ENCODE measurements at regions of chr16 and their contacts with region 1.

Region 1: DNA sequence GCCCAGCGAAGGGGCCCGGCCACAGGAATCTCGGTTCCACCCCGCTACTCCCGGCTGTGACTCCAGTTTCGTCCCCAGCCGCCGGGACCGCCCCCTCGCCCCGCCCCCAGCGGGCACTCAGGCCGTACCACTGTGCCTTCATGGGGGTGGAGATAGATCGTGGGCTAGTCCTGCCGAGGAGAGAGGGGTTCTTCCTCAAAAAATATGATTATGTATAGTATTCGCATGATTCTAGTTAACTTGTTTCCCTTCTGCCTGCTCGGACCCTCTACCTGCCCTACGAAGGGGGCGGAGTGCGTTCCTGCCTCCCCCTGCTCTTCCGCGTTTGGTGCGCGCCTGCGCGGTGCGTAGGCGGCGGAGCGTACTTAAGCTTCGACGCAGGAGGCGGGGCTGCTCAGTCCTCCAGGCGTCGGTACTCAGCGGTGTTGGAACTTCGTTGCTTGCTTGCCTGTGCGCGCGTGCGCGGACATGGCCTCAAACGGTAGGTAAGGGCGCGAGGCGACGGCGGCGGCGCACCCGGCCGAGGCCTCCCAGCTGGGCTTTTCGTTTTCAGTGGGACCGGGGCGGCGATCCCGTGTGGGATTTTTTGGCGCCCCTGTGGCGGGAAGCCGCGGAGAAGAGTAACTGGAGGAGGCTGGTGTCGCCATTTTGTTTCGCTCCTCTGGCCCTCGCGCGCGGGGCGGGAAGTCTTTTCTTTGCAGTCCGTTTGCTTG is at the start of gene FUS:
- DNase-seq: peak; percentile 95
- H3K4me3 ChIP-seq: peak within 1 kb of the TSS; percentile 78 to 94
- H3K27ac ChIP-seq: peak within 1 kb of the TSS; percentile 96 to 97
- H3K4me1 ChIP-seq: peaks cover 29% of the 10 kb centered on the region
- H3K27me3 ChIP-seq: no peaks in the 10 kb centered on the region
- CTCF ChIP-seq: peak in 2 of 3 experiments; percentile 18 to 20
- POLR2A ChIP-seq: peak; percentile 85
- total RNA-seq, gene FUS: 205 to 217 TPM

Region 2: GRCh38 chr16:31052124-31052523 is 127.8 kb before region 1 on chr16:
- intact Hi-C with region 1: no loop called
- DNase-seq: no peak
- H3K4me3 ChIP-seq: no peak overlapping the region
- H3K27ac ChIP-seq: no peak overlapping the region
- H3K4me1 ChIP-seq: no peaks in the 10 kb centered on the region
- H3K27me3 ChIP-seq: no peaks in the 10 kb centered on the region
- CTCF ChIP-seq: no peak
- POLR2A ChIP-seq: no peak

Region 3: DNA sequence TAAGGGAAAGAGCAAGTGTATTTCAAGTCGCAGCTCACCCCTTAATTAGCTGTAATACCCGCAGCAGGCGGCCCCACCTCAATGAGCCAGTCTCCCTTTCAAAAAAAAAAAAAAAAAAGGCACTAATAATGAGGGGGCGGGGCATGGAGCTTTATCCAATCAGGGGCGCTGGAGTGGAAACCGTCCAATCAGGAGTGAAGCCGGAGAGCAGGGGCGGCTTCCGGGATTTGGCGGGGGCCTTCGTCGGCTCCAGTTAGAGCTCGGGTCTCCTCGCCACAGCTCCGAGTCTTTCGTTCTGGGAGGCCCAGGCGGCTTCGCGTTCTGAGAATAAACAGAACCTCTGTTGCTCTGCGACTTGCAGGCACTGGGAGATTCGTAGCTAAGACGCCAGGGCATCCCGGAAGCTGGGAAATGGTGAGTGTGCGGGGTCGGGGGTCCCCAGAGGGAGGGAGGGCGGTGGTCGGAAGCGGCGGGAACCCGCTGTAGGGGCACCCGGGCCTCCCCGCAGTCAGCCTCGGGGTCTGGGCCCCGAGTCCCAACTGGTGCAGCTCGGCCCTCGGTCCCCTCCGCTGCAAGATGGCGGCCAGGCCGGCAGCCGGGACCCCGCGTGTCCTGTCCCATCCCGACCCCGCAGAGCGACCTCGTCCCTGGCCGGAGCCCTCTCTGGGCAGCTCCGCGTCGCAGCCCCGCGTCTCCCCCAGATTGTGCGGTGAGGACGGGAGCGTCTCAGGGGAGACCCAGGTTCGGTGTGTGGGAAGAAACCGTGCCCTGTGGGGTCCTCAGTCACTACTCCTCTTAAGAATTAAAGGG is 693.9 kb after region 1 on chr16 and contains the start of gene ZNF267:
- intact Hi-C with region 1: loop called (anchors 10 kb)
- DNase-seq: peak; percentile 98
- H3K4me3 ChIP-seq: peak within 1 kb of the TSS; percentile 82 to 90
- H3K27ac ChIP-seq: peak within 1 kb of the TSS; percentile 86 to 89
- H3K4me1 ChIP-seq: peaks cover 13% of the 10 kb centered on the region
- H3K27me3 ChIP-seq: no peaks in the 10 kb centered on the region
- CTCF ChIP-seq: peak in 1 of 3 experiments; percentile 0
- POLR2A ChIP-seq: peak; percentile 61
- total RNA-seq, gene ZNF267: 17.8 to 18.7 TPM

Measured in testis (tissue), 5 donors.